Naive thymus-derived CD4-positive, alpha-beta T cell (primary cell): ENCODE measurements at regions of chr20 and their contacts with region 1.

Region 1: GRCh38 chr20:21505161-21505809 is 8.6 kb downstream of the NKX2-2 start:
- DNase-seq: peak; percentile 51 to 86 (median 76)
- ATAC-seq: peak; percentile 82
- H3K4me3 ChIP-seq: peak overlapping the region; percentile 55
- H3K4me3 Mint-ChIP-seq: peak overlapping the region; percentile 53 to 80 (median 72)
- H3K27ac ChIP-seq: no peak overlapping the region
- H3K27ac Mint-ChIP-seq: peak overlapping the region in 2 of 9 donors; percentile 20 to 74
- H3K4me1 ChIP-seq: peaks cover 10 to 16% of the 10 kb centered on the region in 2 donors
- H3K4me1 Mint-ChIP-seq: peaks cover 0 to 40% (median 32%) of the 10 kb centered on the region in 7 donors
- H3K27me3 ChIP-seq: peaks cover 7 to 29% of the 10 kb centered on the region in 2 donors
- H3K27me3 Mint-ChIP-seq: peaks cover 52 to 60% (median 55%) of the 10 kb centered on the region in 5 donors

Region 2: GRCh38 chr20:20369250-20370093 is 1135.8 kb before region 1 on chr20:
- CTCF ChIA-PET with region 1: no interaction called
- POLR2A ChIA-PET with region 1: no interaction called
- intact Hi-C with region 1: loop called in 1 of 2 experiments (anchors 5 kb)
- DNase-seq: peak in 1 of 9 donors; percentile 63
- ATAC-seq: no peak
- H3K4me3 ChIP-seq: no peak overlapping the region
- H3K4me3 Mint-ChIP-seq: peak overlapping the region in 9 of 10 donors; percentile 11 to 82 (median 68)
- H3K27ac ChIP-seq: no peak overlapping the region
- H3K27ac Mint-ChIP-seq: peak overlapping the region in 1 of 9 donors; percentile 51
- H3K4me1 ChIP-seq: no peaks in the 10 kb centered on the region
- H3K4me1 Mint-ChIP-seq: peaks cover 8 to 18% (median 13%) of the 10 kb centered on the region in 7 donors
- H3K27me3 ChIP-seq: peaks cover 0 to 5% of the 10 kb centered on the region in 2 donors
- H3K27me3 Mint-ChIP-seq: peaks cover 61 to 73% (median 67%) of the 10 kb centered on the region in 5 donors

Region 3: DNA sequence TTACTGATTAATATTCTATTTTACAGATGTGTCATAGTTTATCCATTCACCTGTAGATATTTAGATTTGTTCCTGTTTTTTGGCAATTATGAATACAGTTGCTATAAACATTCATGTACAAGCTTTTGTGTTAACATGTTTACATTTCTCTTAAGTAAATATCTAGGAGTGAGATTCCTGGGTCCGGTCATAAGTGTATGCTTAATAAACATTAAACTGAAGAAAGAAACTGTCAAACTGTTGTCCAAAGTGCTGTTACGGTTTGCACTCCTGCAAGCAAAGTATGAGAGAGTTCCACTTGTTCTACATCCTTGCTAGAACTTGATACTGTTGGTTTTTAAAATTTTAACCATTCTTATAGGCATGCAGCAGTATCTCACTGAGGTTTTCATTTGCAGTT is 931.5 kb before region 1 on chr20:
- CTCF ChIA-PET with region 1: no interaction called
- POLR2A ChIA-PET with region 1: no interaction called
- intact Hi-C with region 1: no loop called
- DNase-seq: no peak
- ATAC-seq: no peak
- H3K4me3 ChIP-seq: no peak overlapping the region
- H3K4me3 Mint-ChIP-seq: no peak overlapping the region
- H3K27ac ChIP-seq: no peak overlapping the region
- H3K27ac Mint-ChIP-seq: no peak overlapping the region
- H3K4me1 ChIP-seq: no peaks in the 10 kb centered on the region
- H3K4me1 Mint-ChIP-seq: no peaks in the 10 kb centered on the region
- H3K27me3 ChIP-seq: no peaks in the 10 kb centered on the region
- H3K27me3 Mint-ChIP-seq: no peaks in the 10 kb centered on the region

Region 4: GRCh38 chr20:21048841-21049273 is 456.4 kb before region 1 on chr20:
- CTCF ChIA-PET with region 1: interaction called, 3 read pairs
- POLR2A ChIA-PET with region 1: no interaction called
- intact Hi-C with region 1: loop called in 1 of 2 experiments (anchors 1 kb)
- DNase-seq: peak in 7 of 9 donors; percentile 7 to 58 (median 27)
- ATAC-seq: peak; percentile 71
- H3K4me3 ChIP-seq: no peak overlapping the region
- H3K4me3 Mint-ChIP-seq: no peak overlapping the region
- H3K27ac ChIP-seq: no peak overlapping the region
- H3K27ac Mint-ChIP-seq: peak overlapping the region in 1 of 9 donors; percentile 72
- H3K4me1 ChIP-seq: no peaks in the 10 kb centered on the region
- H3K4me1 Mint-ChIP-seq: no peaks in the 10 kb centered on the region
- H3K27me3 ChIP-seq: no peaks in the 10 kb centered on the region
- H3K27me3 Mint-ChIP-seq: peaks cover 16 to 50% (median 33%) of the 10 kb centered on the region in 5 donors

Region 5: DNA sequence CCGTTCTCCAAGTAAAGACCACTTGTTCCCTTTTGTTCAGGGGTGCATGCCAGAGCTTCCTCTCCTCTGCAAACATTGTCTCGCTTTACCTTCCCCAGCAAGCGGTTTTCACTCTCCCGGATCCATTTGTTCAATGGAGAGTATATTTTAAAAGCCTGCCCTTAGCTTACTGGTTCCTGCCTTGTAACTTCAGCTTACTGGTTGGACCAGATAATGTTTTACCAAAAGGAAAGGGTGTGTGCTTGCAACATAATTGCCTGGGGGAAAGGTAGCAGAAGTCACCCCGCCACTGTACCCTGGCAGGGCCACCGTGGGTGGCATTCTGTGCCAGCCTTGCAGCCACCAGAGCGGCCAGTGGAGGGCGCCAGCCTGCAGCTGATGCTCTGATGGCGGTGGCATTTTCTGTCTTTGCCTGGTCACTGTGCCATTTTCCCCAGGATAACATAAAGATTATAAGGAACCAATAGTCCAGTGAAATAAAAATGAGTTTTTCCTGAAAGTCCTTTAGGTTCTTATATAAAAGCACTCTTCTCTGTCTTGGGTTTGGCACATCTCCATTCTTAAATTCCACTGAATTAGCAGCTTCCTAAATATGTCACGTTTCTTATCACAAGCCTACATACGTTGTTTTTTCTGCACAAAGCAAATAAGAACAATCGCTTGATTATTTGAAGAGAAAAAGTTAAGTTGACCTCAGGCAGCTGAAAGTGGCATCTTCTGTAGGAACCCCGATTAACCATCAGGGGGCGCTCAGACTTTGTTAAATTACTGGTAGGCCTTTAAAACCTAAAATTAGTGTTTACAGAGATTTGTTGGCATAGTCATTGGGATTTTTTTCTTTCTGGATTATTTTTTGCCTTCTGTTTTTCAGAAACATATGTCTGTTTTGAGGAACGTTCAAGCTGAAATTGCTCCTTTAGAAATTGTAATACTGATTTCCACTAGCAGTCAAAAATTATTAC is 269.5 kb before region 1 on chr20:
- CTCF ChIA-PET with region 1: interaction called, 70 read pairs
- POLR2A ChIA-PET with region 1: interaction called, 3 read pairs
- intact Hi-C with region 1: loop called (anchors 1 kb)
- DNase-seq: peak; percentile 24 to 69 (median 65)
- ATAC-seq: peak; percentile 84
- H3K4me3 ChIP-seq: no peak overlapping the region
- H3K4me3 Mint-ChIP-seq: no peak overlapping the region
- H3K27ac ChIP-seq: no peak overlapping the region
- H3K27ac Mint-ChIP-seq: no peak overlapping the region
- H3K4me1 ChIP-seq: no peaks in the 10 kb centered on the region
- H3K4me1 Mint-ChIP-seq: peaks cover 0 to 6% (median 4%) of the 10 kb centered on the region in 7 donors
- H3K27me3 ChIP-seq: no peaks in the 10 kb centered on the region
- H3K27me3 Mint-ChIP-seq: no peaks in the 10 kb centered on the region

Region 6: GRCh38 chr20:21520702-21521595 is 15.7 kb after region 1 on chr20:
- CTCF ChIA-PET with region 1: interaction called, 7 read pairs
- POLR2A ChIA-PET with region 1: no interaction called
- intact Hi-C with region 1: loop called in 1 of 2 experiments (anchors 2 kb)
- DNase-seq: no peak
- ATAC-seq: no peak
- H3K4me3 ChIP-seq: no peak overlapping the region
- H3K4me3 Mint-ChIP-seq: peak overlapping the region in 9 of 10 donors; percentile 35 to 68 (median 51)
- H3K27ac ChIP-seq: no peak overlapping the region
- H3K27ac Mint-ChIP-seq: peak overlapping the region in 2 of 9 donors; percentile 43 to 77
- H3K4me1 ChIP-seq: peaks cover 0 to 19% of the 10 kb centered on the region in 2 donors
- H3K4me1 Mint-ChIP-seq: peaks cover 12 to 50% (median 42%) of the 10 kb centered on the region in 7 donors
- H3K27me3 ChIP-seq: peaks cover 0 to 51% of the 10 kb centered on the region in 2 donors
- H3K27me3 Mint-ChIP-seq: peaks cover 81 to 91% (median 83%) of the 10 kb centered on the region in 5 donors

Region 7: GRCh38 chr20:21615617-21616080 is 110.4 kb after region 1 on chr20:
- CTCF ChIA-PET with region 1: interaction called, 13 read pairs
- POLR2A ChIA-PET with region 1: no interaction called
- intact Hi-C with region 1: no loop called
- DNase-seq: peak in 7 of 9 donors; percentile 13 to 38 (median 24)
- ATAC-seq: no peak
- H3K4me3 ChIP-seq: no peak overlapping the region
- H3K4me3 Mint-ChIP-seq: no peak overlapping the region
- H3K27ac ChIP-seq: no peak overlapping the region
- H3K27ac Mint-ChIP-seq: no peak overlapping the region
- H3K4me1 ChIP-seq: no peaks in the 10 kb centered on the region
- H3K4me1 Mint-ChIP-seq: peaks cover 0 to 6% (median 0%) of the 10 kb centered on the region in 7 donors
- H3K27me3 ChIP-seq: no peaks in the 10 kb centered on the region
- H3K27me3 Mint-ChIP-seq: peaks cover 9 to 55% (median 42%) of the 10 kb centered on the region in 5 donors